ENCODE measurements at regions of chr22 and their contacts with region 1.

Region 1: GRCh38 chr22:39135090-39135896 is 17.2 kb downstream of the CBX7 start:
- DNase-seq: no peak
- ATAC-seq: peak; percentile 92
- H3K4me3 Mint-ChIP-seq: no peak overlapping the region
- H3K27ac Mint-ChIP-seq: no peak overlapping the region
- H3K4me1 Mint-ChIP-seq: no peaks in the 10 kb centered on the region
- H3K27me3 Mint-ChIP-seq: no peaks in the 10 kb centered on the region
- CTCF ChIP-seq: no peak

Region 2: DNA sequence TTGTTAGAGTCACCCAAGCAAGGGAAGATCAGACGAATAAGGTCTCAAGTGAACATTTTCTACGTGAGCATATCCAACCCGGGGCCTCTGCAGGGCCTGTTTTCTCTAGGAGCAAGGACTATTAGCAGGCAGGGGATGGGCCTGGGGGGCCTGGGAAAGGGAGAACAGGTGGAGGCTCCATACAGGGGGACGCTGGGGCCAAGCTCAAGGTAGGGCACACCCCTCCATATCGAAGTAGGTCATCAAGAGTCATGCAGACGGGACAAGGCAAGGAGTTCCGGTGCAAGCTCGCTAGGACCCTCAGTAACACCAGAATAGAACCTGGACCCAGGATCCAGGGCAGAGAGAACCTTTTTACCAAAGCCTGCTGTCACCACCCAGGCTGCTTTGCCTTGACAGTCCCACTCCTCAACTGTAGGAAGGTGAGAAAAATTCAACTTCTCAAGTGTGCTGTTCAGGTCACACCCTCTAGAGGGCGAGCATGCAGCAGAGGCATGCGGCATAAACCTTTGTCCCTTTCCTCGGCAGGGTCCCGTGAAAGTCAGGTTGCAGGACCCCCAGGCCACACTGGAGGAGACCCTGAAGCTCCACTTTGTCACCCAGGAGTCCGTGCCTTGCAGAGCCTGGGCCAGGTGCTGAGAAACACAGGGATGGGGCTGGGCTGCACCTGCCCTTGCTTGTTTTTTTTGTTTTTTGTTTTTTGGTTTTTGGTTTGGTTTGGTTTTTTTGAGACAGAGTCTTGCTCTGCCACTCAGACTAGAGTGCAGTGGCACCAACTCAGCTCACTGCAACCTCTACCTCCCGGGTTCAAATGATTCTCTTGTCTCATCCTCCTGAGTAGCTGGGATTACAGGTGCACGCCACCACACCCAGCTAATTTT is 161.8 kb before region 1 on chr22:
- CTCF ChIA-PET with region 1: no interaction called
- POLR2A ChIA-PET with region 1: no interaction called
- intact Hi-C with region 1: no loop called
- DNase-seq: no peak
- ATAC-seq: peak; percentile 98
- H3K4me3 Mint-ChIP-seq: no peak overlapping the region
- H3K27ac Mint-ChIP-seq: peak overlapping the region; percentile 24
- H3K4me1 Mint-ChIP-seq: peaks cover 2% of the 10 kb centered on the region
- H3K27me3 Mint-ChIP-seq: peaks cover 6% of the 10 kb centered on the region
- CTCF ChIP-seq: no peak

Region 3: DNA sequence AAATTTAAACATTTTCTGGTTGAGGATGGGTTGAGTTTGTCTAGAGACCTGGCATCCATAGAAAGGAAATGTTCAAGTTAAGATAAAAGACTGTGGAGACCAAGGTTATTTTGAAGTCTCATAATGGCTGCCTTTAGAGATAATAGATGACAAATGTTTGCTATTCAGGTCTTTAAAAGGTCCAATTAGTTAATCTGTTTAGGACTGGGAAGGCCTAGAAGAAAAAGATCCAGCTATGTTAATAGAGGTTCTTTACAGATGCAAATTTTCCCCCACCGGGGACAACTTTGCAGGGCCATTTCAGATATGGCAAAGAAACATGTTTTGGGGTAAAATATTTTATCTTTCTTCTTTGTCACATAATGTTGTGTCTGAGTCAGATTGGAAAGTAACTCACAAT is 61.4 kb before region 1 on chr22:
- CTCF ChIA-PET with region 1: no interaction called
- POLR2A ChIA-PET with region 1: no interaction called
- intact Hi-C with region 1: no loop called
- DNase-seq: no peak
- ATAC-seq: no peak
- H3K4me3 Mint-ChIP-seq: no peak overlapping the region
- H3K27ac Mint-ChIP-seq: peak overlapping the region; percentile 94
- H3K4me1 Mint-ChIP-seq: peaks cover 76% of the 10 kb centered on the region
- H3K27me3 Mint-ChIP-seq: no peaks in the 10 kb centered on the region
- CTCF ChIP-seq: no peak

Region 4: DNA sequence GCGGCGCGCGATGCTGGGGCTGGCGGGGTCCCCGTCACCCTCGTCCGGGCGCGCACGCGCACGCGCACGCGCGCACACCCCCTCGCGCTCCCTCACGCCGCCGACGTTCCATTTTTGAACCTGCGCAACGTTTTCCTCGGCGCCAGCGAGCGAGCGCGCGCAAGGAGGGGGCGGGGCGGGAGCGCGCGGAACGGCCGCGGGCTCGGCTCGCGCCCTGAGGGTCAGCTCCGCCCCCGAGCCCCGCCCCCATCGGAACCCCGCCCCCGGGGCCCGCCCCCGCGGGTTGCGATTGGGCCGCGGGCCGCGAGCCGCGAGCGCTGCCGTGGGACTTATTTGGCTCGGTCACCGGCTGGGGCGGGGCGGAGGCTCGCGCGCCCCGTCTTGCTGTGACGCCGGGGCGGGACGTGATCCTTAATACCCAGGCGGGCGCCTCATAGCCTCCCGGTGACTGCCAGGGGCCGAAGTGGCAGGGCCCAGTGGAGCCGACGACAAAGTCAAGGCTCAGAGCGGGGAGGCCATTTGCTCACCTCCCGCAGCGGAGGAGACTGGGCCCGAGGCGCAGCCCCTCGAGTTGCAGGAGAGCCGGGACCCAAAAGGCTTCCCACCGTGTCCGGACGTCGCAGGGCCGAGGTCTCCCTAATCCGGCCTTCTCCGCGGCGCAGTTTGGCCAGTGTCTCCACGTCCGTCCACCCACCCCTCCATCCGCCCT is 17.4 kb after region 1 on chr22 and contains the start of gene CBX7:
- CTCF ChIA-PET with region 1: interaction called, 4 read pairs
- POLR2A ChIA-PET with region 1: interaction called, 3 read pairs
- intact Hi-C with region 1: loop called (anchors 2 kb)
- DNase-seq: peak; percentile 94
- ATAC-seq: peak; percentile 84
- H3K4me3 Mint-ChIP-seq: peak within 1 kb of the TSS; percentile 84
- H3K27ac Mint-ChIP-seq: peak within 1 kb of the TSS; percentile 76
- H3K4me1 Mint-ChIP-seq: peaks cover 46% of the 10 kb centered on the region
- H3K27me3 Mint-ChIP-seq: peaks cover 16% of the 10 kb centered on the region
- CTCF ChIP-seq: no peak
- total RNA-seq, gene CBX7: 42.6 and 45.4 TPM in 2 replicates

Region 5: GRCh38 chr22:39306581-39307361 is 171.5 kb after region 1 on chr22:
- CTCF ChIA-PET with region 1: interaction called, 5 read pairs
- POLR2A ChIA-PET with region 1: interaction called, 3 read pairs
- intact Hi-C with region 1: loop called (anchors 1 kb)
- DNase-seq: no peak
- ATAC-seq: peak; percentile 29
- H3K4me3 Mint-ChIP-seq: no peak overlapping the region
- H3K27ac Mint-ChIP-seq: no peak overlapping the region
- H3K4me1 Mint-ChIP-seq: peaks cover 17% of the 10 kb centered on the region
- H3K27me3 Mint-ChIP-seq: no peaks in the 10 kb centered on the region
- CTCF ChIP-seq: no peak

Measured in activated B cell treated with CpG ODN at 0.5 μM for 24 hours (primary cell).